A549 (cell line): ENCODE measurements at regions of chr1 and their contacts with region 1.

Region 1: GRCh38 chr1:171566467-171566866 is 55.6 kb upstream of the MYOCOS start:
- DNase-seq: peak in 1 of 2 experiments; percentile 16
- ATAC-seq: peak; percentile 59; a peak in 2 of 6 replicates
- H3K4me3 ChIP-seq: no peak overlapping the region
- H3K27ac ChIP-seq: no peak overlapping the region
- H3K4me1 ChIP-seq: no peaks in the 10 kb centered on the region
- CTCF ChIP-seq: peak; percentile 35; the same call in 2 of the 3 replicates
- EP300 ChIP-seq: no peak
- POLR2A ChIP-seq: no peak
- RAD21 ChIP-seq: 0 out of 5 replicates have a peak, but pooled peaks have one; percentile 4 to 12

Region 2: GRCh38 chr1:171501305-171502024 is 65.0 kb before region 1 on chr1:
- CTCF ChIA-PET with region 1: no interaction called
- POLR2A ChIA-PET with region 1: no interaction called
- DNase-seq: no peak
- ATAC-seq: no peak
- H3K4me3 ChIP-seq: no peak overlapping the region
- H3K27ac ChIP-seq: no peak overlapping the region
- H3K4me1 ChIP-seq: peaks cover 3% of the 10 kb centered on the region; the same call in 2 of the 3 replicates
- CTCF ChIP-seq: no peak
- EP300 ChIP-seq: no peak
- POLR2A ChIP-seq: no peak
- RAD21 ChIP-seq: no peak

Region 3: DNA sequence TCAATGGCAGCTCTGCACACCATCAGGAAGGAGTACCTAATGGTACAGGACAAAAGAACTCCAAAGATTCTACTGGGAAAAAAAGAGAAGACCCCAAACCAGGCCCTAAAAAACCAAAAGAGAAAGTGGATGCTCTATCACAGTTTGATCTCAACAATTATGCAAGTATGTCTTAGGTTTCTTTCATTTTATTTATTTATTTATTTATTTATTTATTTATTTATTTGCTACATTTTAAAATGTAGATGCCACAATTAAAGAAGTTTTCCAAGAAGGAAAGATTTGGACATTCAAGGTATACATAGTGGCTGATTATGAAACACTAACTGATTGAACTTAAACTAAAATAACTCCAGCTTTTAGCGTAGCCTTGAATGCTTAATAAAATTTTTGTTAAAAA is 20.9 kb before region 1 on chr1:
- CTCF ChIA-PET with region 1: no interaction called
- POLR2A ChIA-PET with region 1: no interaction called
- DNase-seq: no peak
- ATAC-seq: no peak
- H3K4me3 ChIP-seq: no peak overlapping the region
- H3K27ac ChIP-seq: no peak overlapping the region
- H3K4me1 ChIP-seq: no peaks in the 10 kb centered on the region
- CTCF ChIP-seq: no peak
- EP300 ChIP-seq: no peak
- POLR2A ChIP-seq: no peak
- RAD21 ChIP-seq: no peak

Region 4: DNA sequence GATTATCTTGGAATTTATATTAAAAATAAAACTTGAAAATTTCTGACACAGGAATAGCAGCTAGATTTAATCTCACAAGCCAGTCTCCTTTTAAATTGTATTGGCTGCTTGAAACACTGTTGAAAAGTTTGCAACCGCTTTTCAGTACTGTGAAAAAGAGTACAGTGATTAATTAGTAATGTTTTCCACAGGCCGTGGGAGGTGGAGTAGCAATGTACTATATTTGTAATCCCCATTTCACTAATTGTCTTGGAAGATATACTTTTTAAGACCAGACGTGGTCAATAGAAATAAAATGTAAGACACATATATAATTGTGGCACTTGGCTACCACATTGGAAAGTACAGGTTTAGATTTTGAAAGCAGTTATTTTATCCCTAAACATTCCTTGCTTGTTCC is 14.8 kb after region 1 on chr1:
- CTCF ChIA-PET with region 1: interaction called, 11 read pairs
- POLR2A ChIA-PET with region 1: no interaction called
- DNase-seq: no peak
- ATAC-seq: no peak
- H3K4me3 ChIP-seq: no peak overlapping the region
- H3K27ac ChIP-seq: no peak overlapping the region
- H3K4me1 ChIP-seq: peaks cover 2% of the 10 kb centered on the region; the same call in 2 of the 3 replicates
- CTCF ChIP-seq: no peak
- EP300 ChIP-seq: no peak
- POLR2A ChIP-seq: no peak
- RAD21 ChIP-seq: no peak